Naive thymus-derived CD4-positive, alpha-beta T cell (primary cell): ENCODE measurements at regions of chr3 and their contacts with region 1.

Region 1: GRCh38 chr3:16928386-16929132 is 43.8 kb downstream of the PLCL2 start:
- DNase-seq: no peak
- ATAC-seq: peak; percentile 42
- H3K4me3 ChIP-seq: no peak overlapping the region
- H3K4me3 Mint-ChIP-seq: peak overlapping the region in 8 of 10 donors; percentile 12 to 76 (median 44)
- H3K27ac ChIP-seq: no peak overlapping the region
- H3K27ac Mint-ChIP-seq: peak overlapping the region in 7 of 9 donors; percentile 2 to 74 (median 47)
- H3K4me1 ChIP-seq: peaks cover 6 to 40% of the 10 kb centered on the region in 2 donors
- H3K4me1 Mint-ChIP-seq: peaks cover 50 to 88% (median 83%) of the 10 kb centered on the region in 7 donors
- H3K27me3 ChIP-seq: no peaks in the 10 kb centered on the region
- H3K27me3 Mint-ChIP-seq: no peaks in the 10 kb centered on the region

Region 2: GRCh38 chr3:16917980-16918682 is 10.4 kb before region 1 on chr3:
- CTCF ChIA-PET with region 1: no interaction called
- POLR2A ChIA-PET with region 1: interaction called, 4 read pairs
- intact Hi-C with region 1: loop called in 1 of 2 experiments (anchors 1 kb)
- DNase-seq: no peak
- ATAC-seq: no peak
- H3K4me3 ChIP-seq: no peak overlapping the region
- H3K4me3 Mint-ChIP-seq: peak overlapping the region in 5 of 10 donors; percentile 8 to 61 (median 49)
- H3K27ac ChIP-seq: no peak overlapping the region
- H3K27ac Mint-ChIP-seq: peak overlapping the region in 1 of 9 donors; percentile 10
- H3K4me1 ChIP-seq: peaks cover 32 to 35% of the 10 kb centered on the region in 2 donors
- H3K4me1 Mint-ChIP-seq: peaks cover 35 to 95% (median 80%) of the 10 kb centered on the region in 7 donors
- H3K27me3 ChIP-seq: no peaks in the 10 kb centered on the region
- H3K27me3 Mint-ChIP-seq: no peaks in the 10 kb centered on the region